ENCODE measurements at regions of chr4 and their contacts with region 1.

Region 1: GRCh38 chr4:188428935-188429334 is 289.7 kb downstream of the TRIML1 start:
- DNase-seq: no peak
- H3K4me3 ChIP-seq: no peak overlapping the region
- CTCF ChIP-seq: no peak

Region 2: GRCh38 chr4:187972135-187972534 is 456.8 kb before region 1 on chr4:
- in situ Hi-C with region 1: no loop called
- DNase-seq: no peak
- H3K4me3 ChIP-seq: no peak overlapping the region
- CTCF ChIP-seq: no peak

Region 3: GRCh38 chr4:188466001-188466400 is 37.1 kb after region 1 on chr4:
- in situ Hi-C with region 1: loop called (anchors 5 kb)
- DNase-seq: no peak
- H3K4me3 ChIP-seq: no peak overlapping the region
- CTCF ChIP-seq: no peak

Region 4: DNA sequence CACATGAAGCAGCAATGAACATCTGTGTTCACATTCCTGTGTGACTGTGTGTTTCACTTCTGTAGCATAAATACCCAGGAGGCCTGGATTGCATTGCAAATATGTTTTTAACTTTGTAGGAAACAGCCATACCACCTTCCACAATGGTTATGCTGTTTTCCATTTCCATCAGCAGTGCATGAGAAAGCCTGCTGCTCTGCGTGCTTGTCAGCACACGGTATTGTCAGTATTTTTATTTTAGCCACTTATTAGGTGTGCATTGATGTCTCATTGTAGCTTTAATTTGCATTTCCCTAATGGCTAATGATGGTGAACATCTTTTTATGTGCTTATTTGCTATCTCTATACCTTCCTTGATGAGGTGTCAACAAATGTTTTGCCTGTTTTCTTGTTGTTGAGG is 66.2 kb after region 1 on chr4:
- in situ Hi-C with region 1: no loop called
- DNase-seq: no peak
- H3K4me3 ChIP-seq: no peak overlapping the region
- CTCF ChIP-seq: no peak

Region 5: GRCh38 chr4:188511431-188511830 is 82.5 kb after region 1 on chr4:
- in situ Hi-C with region 1: no loop called
- DNase-seq: no peak
- H3K4me3 ChIP-seq: no peak overlapping the region
- CTCF ChIP-seq: no peak